ENCODE measurements at regions of chr1 and their contacts with region 1.

Region 1: DNA sequence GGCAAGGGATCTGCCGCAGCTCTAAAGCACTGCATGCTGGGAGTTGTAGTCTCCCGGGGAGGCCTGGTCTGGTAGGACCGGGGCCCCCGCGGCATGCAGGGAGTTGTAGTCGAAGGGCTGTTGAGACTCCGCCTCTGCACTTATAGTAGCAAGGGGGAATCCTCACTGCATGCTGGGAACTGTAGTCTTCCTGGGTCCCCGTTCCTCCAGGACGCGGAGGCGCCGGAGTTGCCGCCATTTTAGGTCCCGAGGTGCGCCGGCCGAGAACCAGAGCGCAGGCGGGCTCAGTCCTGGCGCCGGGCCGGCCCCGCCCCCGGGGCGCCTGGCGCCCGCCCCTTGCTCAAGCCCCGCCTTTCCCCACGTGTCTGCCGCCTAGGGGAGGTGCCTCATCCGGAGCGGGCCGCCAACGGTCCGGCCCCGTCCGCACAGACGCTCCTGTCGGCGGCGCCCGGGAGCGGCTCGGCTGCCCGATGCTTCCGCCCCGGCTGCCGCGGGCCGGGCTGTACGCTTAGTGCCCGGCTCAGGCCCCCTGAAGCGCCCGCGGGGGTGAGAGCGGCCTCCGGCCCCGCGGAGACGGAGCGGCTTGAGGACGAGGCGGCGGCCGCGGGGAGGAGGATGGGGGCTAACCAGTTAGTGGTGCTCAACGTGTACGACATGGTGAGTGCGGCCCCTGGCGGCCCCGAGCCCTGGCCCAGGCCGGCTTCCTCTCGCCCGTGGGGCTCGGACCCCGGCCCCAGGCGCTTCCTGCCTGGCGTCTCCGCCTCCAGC is at the start of gene DESI2:
- DNase-seq: peak; percentile 99
- ATAC-seq: peak; percentile 87
- H3K4me3 ChIP-seq: peak within 1 kb of the TSS; percentile 51 to 91 (median 81)
- H3K4me3 Mint-ChIP-seq: no peak within 1 kb of the TSS
- H3K27ac ChIP-seq: peak within 1 kb of the TSS; percentile 64 to 88
- H3K27ac Mint-ChIP-seq: peak within 1 kb of the TSS; percentile 93
- H3K4me1 ChIP-seq: peaks cover 23 to 24% of the 10 kb centered on the region in 2 donors
- H3K4me1 Mint-ChIP-seq: peaks cover 20% of the 10 kb centered on the region
- H3K27me3 ChIP-seq: no peaks in the 10 kb centered on the region
- H3K27me3 Mint-ChIP-seq: no peaks in the 10 kb centered on the region
- CTCF ChIP-seq: peak; percentile 65
- total RNA-seq, gene DESI2: 25.2 and 25.9 TPM in 2 replicates

Region 2: GRCh38 chr1:244451951-244452795 is 200.7 kb before region 1 on chr1:
- CTCF ChIA-PET with region 1: no interaction called
- POLR2A ChIA-PET with region 1: no interaction called
- intact Hi-C with region 1: loop called (anchors 1 kb)
- DNase-seq: peak; percentile 100
- ATAC-seq: peak; percentile 92
- H3K4me3 ChIP-seq: peak overlapping the region in 4 of 5 experiments; percentile 88 to 98 (median 93)
- H3K4me3 Mint-ChIP-seq: peak overlapping the region; percentile 95
- H3K27ac ChIP-seq: peak overlapping the region; percentile 92 to 94
- H3K27ac Mint-ChIP-seq: peak overlapping the region; percentile 94
- H3K4me1 ChIP-seq: peaks cover 17 to 18% of the 10 kb centered on the region in 2 donors
- H3K4me1 Mint-ChIP-seq: peaks cover 35% of the 10 kb centered on the region
- H3K27me3 ChIP-seq: no peaks in the 10 kb centered on the region
- H3K27me3 Mint-ChIP-seq: no peaks in the 10 kb centered on the region
- CTCF ChIP-seq: peak; percentile 47

Region 3: GRCh38 chr1:244513493-244513892 is 139.4 kb before region 1 on chr1:
- CTCF ChIA-PET with region 1: no interaction called
- POLR2A ChIA-PET with region 1: no interaction called
- intact Hi-C with region 1: no loop called
- DNase-seq: no peak
- ATAC-seq: no peak
- H3K4me3 ChIP-seq: no peak overlapping the region
- H3K4me3 Mint-ChIP-seq: no peak overlapping the region
- H3K27ac ChIP-seq: no peak overlapping the region
- H3K27ac Mint-ChIP-seq: no peak overlapping the region
- H3K4me1 ChIP-seq: no peaks in the 10 kb centered on the region
- H3K4me1 Mint-ChIP-seq: no peaks in the 10 kb centered on the region
- H3K27me3 ChIP-seq: no peaks in the 10 kb centered on the region
- H3K27me3 Mint-ChIP-seq: no peaks in the 10 kb centered on the region
- CTCF ChIP-seq: no peak

Region 4: DNA sequence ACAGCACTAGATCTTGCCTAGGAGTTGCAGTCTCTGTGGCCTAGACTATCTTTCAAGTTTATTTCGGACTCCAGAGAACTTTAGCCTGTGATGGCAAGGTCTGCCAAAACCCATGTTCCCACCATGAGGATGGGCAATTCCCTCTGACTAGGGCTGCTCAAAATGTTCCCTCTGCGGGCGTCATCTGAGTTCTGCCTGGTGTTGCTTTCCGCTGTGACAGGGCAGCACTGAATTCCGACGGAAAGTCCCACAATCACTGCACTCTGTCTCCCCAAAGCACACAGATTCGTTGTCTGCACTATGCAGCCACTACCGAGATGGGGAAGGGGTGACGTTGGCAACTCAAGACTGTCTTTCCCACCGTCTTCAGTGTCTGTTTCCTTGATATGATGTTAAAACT is 116.6 kb before region 1 on chr1:
- CTCF ChIA-PET with region 1: no interaction called
- POLR2A ChIA-PET with region 1: no interaction called
- intact Hi-C with region 1: no loop called
- DNase-seq: no peak
- ATAC-seq: no peak
- H3K4me3 ChIP-seq: no peak overlapping the region
- H3K4me3 Mint-ChIP-seq: no peak overlapping the region
- H3K27ac ChIP-seq: no peak overlapping the region
- H3K27ac Mint-ChIP-seq: no peak overlapping the region
- H3K4me1 ChIP-seq: no peaks in the 10 kb centered on the region
- H3K4me1 Mint-ChIP-seq: no peaks in the 10 kb centered on the region
- H3K27me3 ChIP-seq: no peaks in the 10 kb centered on the region
- H3K27me3 Mint-ChIP-seq: no peaks in the 10 kb centered on the region
- CTCF ChIP-seq: no peak

Region 5: GRCh38 chr1:244665771-244666217 is 12.9 kb after region 1 on chr1:
- CTCF ChIA-PET with region 1: interaction called, 11 read pairs
- POLR2A ChIA-PET with region 1: interaction called, 5 read pairs
- intact Hi-C with region 1: loop called (anchors 1 kb)
- DNase-seq: peak; percentile 54
- ATAC-seq: peak; percentile 90
- H3K4me3 ChIP-seq: no peak overlapping the region
- H3K4me3 Mint-ChIP-seq: no peak overlapping the region
- H3K27ac ChIP-seq: no peak overlapping the region
- H3K27ac Mint-ChIP-seq: no peak overlapping the region
- H3K4me1 ChIP-seq: peaks cover 32 to 40% of the 10 kb centered on the region in 2 donors
- H3K4me1 Mint-ChIP-seq: peaks cover 21% of the 10 kb centered on the region
- H3K27me3 ChIP-seq: no peaks in the 10 kb centered on the region
- H3K27me3 Mint-ChIP-seq: no peaks in the 10 kb centered on the region
- CTCF ChIP-seq: no peak

Region 6: GRCh38 chr1:244801246-244801645 is 148.4 kb after region 1 on chr1:
- CTCF ChIA-PET with region 1: interaction called, 19 read pairs
- POLR2A ChIA-PET with region 1: no interaction called
- intact Hi-C with region 1: loop called (anchors 1 kb)
- DNase-seq: peak; percentile 80
- ATAC-seq: peak; percentile 94
- H3K4me3 ChIP-seq: no peak overlapping the region
- H3K4me3 Mint-ChIP-seq: peak overlapping the region; percentile 68
- H3K27ac ChIP-seq: no peak overlapping the region
- H3K27ac Mint-ChIP-seq: peak overlapping the region; percentile 38
- H3K4me1 ChIP-seq: peaks cover 6 to 8% of the 10 kb centered on the region in 2 donors
- H3K4me1 Mint-ChIP-seq: peaks cover 2% of the 10 kb centered on the region
- H3K27me3 ChIP-seq: no peaks in the 10 kb centered on the region
- H3K27me3 Mint-ChIP-seq: peaks cover 10% of the 10 kb centered on the region
- CTCF ChIP-seq: peak; percentile 81

Region 7: GRCh38 chr1:244835276-244836134 is 182.6 kb after region 1 on chr1 and contains the start of gene COX20:
- CTCF ChIA-PET with region 1: interaction called, 3 read pairs
- POLR2A ChIA-PET with region 1: interaction called, 7 read pairs
- intact Hi-C with region 1: loop called (anchors 1 kb)
- DNase-seq: peak; percentile 97
- ATAC-seq: peak; percentile 69
- H3K4me3 ChIP-seq: peak within 1 kb of the TSS; percentile 89 to 98 (median 94)
- H3K4me3 Mint-ChIP-seq: peak within 1 kb of the TSS; percentile 100
- H3K27ac ChIP-seq: peak within 1 kb of the TSS; percentile 97
- H3K27ac Mint-ChIP-seq: peak within 1 kb of the TSS; percentile 100
- H3K4me1 ChIP-seq: peaks cover 21 to 27% of the 10 kb centered on the region in 2 donors
- H3K4me1 Mint-ChIP-seq: peaks cover 59% of the 10 kb centered on the region
- H3K27me3 ChIP-seq: no peaks in the 10 kb centered on the region
- H3K27me3 Mint-ChIP-seq: no peaks in the 10 kb centered on the region
- CTCF ChIP-seq: peak; percentile 13
- total RNA-seq, gene COX20: 35.7 and 37.7 TPM in 2 replicates